ENCODE measurements at regions of chr20 and their contacts with region 1.

Region 1: GRCh38 chr20:1616858-1617434 is 2.9 kb downstream of the SIRPB1 start:
- DNase-seq: peak; percentile 94
- H3K4me3 ChIP-seq: no peak overlapping the region
- H3K27ac ChIP-seq: peak overlapping the region; percentile 76
- H3K4me1 ChIP-seq: peaks cover 25% of the 10 kb centered on the region
- H3K27me3 ChIP-seq: no peaks in the 10 kb centered on the region
- CTCF ChIP-seq: no peak
- POLR2A ChIP-seq: no peak

Region 2: DNA sequence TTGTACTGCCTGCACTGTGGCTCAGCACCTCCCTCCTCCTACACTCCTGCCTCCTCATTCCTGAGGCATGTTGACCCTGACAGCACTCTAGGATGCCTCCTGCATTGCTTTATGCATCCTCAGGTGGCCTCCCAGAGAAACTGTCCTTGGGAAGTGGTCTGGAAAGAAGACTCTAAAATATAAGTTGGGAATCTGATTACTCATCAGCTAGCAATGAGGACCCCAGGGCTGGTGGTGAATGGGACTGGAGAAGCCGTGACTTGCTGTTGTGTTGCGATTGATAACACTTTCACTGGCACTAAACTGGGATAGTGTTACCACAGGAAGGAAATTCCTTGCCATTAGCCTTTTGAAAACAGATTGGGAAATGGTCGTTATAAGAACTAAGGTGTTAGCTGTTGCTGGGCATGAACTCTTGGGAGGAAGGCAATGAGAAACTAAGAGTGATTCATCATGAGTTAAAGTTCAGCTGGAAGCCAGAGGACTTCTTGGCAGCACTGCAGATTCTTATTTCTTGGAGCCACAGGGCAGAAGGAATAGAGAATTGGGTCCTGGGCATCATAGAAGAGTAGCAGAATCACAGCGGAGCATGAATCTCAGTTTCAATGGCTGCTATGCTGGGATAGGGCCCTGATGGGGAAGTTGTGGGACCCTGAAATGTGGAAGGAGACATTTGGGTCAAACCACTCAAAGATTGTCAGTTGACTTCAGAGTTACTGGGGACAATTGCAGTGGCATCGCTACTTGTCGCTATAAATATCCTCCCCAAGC is 49.4 kb before region 1 on chr20:
- CTCF ChIA-PET with region 1: no interaction called
- POLR2A ChIA-PET with region 1: no interaction called
- dilution Hi-C with region 1: no loop called
- intact Hi-C with region 1: loop called (anchors 1 kb)
- DNase-seq: peak; percentile 91
- H3K4me3 ChIP-seq: no peak overlapping the region
- H3K27ac ChIP-seq: peak overlapping the region; percentile 58
- H3K4me1 ChIP-seq: peaks cover 37% of the 10 kb centered on the region
- H3K27me3 ChIP-seq: no peaks in the 10 kb centered on the region
- CTCF ChIP-seq: no peak
- POLR2A ChIP-seq: peak; percentile 37

Measured in endothelial cell of umbilical vein (primary cell).